ENCODE measurements at regions of chr5 and their contacts with region 1.

Region 1: DNA sequence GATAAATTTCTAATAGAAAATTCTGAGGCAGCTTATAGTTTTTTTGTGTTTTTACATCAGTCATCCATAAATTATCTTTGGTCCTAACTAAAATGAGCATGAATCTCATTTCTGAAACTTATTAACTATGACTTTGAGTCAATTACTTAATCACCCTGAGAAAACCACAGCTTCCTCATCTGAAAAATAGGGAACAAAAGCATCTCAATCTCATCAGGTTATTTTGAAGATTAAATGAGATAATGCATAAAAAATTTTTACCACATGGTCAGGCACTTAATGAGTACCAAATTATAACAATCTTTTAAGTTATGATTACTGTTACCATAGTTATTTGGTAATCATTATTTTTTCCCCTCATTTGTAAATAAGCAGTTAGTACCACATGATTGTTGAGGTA is 279.1 kb downstream of the MAST4 start:
- DNase-seq: no peak
- ATAC-seq: no peak
- H3K4me3 Mint-ChIP-seq: no peak overlapping the region
- H3K27ac Mint-ChIP-seq: no peak overlapping the region
- H3K4me1 Mint-ChIP-seq: no peaks in the 10 kb centered on the region
- H3K27me3 Mint-ChIP-seq: no peaks in the 10 kb centered on the region

Region 2: DNA sequence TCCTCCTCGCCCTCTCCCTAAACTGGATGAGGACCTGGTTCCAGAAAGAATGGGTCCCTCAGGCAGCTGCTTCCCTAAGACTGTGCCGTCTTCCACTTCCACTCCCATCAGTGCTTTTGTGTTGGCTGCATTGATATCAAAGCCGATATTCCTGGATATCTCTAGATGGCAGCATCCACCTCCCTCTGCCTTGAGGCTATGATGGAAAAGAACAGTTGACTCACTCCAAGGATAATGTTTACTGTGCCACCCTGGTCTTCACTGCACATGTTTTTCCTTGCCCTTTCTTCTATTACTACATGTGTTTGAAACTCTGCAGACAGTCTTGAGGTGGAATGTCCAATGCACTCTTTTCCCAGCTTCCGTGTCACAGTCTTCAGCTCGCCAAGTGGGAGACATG is 67.6 kb before region 1 on chr5:
- CTCF ChIA-PET with region 1: no interaction called
- POLR2A ChIA-PET with region 1: no interaction called
- DNase-seq: no peak
- ATAC-seq: no peak
- H3K4me3 Mint-ChIP-seq: no peak overlapping the region
- H3K27ac Mint-ChIP-seq: no peak overlapping the region
- H3K4me1 Mint-ChIP-seq: peaks cover 7% of the 10 kb centered on the region
- H3K27me3 Mint-ChIP-seq: peaks cover 33% of the 10 kb centered on the region

Region 3: DNA sequence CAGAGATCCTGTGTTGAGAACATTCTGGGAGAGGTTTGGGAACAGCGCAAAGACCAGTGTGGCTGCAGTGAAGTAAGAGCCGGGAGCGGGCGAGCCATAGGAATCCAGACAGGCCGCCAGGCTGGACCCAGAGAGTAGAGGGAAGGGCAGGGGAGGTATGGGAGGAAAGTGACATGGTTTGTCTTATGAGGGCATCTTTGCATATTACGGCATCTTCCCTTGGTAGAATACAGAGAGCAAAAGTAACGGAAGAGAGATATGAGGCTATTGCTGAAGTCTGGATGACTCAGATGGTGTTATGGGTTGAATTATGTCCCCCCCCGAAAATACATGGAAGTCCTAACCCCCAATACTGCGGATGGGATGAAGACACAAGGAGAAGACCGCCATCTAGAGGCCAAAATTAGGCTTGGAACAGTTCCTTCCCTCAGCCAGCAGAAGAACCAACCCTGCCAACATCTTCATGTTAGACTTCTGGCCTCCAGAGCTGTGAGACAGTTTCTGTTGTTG is 10.9 kb before region 1 on chr5:
- CTCF ChIA-PET with region 1: interaction called, 11 read pairs
- POLR2A ChIA-PET with region 1: no interaction called
- DNase-seq: peak; percentile 50
- ATAC-seq: peak; percentile 70
- H3K4me3 Mint-ChIP-seq: no peak overlapping the region
- H3K27ac Mint-ChIP-seq: no peak overlapping the region
- H3K4me1 Mint-ChIP-seq: no peaks in the 10 kb centered on the region
- H3K27me3 Mint-ChIP-seq: peaks cover 19% of the 10 kb centered on the region